ENCODE measurements at regions of chr1 and their contacts with region 1.

Region 1: DNA sequence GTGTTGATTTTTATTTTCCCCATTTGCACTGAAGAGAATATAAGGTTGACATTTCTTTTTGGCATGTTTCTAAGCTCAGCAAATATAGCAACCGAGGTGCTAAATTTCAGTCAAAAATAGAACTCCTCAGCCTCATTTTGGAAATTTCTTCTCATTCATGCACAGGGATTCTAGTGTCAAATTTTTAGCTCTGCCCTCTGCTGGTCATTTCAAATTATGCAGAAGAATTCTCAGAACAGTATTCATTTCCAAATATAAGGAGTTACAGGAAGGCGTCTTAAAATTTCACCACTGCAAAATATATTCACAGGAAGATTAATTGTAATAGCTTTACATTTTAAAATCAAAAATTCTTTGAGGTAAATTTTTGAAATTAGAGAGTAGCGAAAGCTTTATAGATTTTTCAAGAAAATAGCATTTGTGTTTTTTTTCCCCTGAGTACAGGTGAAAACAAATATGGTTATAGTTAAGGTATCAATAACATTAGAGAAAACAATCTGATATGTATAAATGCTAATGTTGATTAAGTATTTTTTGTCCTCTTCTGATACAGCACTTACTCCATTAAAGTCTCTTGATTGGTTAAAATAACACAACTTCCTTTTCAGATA is 57.9 kb downstream of the FMN2 start:
- DNase-seq: no peak
- H3K4me3 ChIP-seq: no peak overlapping the region
- H3K27ac ChIP-seq: no peak overlapping the region
- H3K27me3 ChIP-seq: no peaks in the 10 kb centered on the region
- CTCF ChIP-seq: peak; percentile 72

Region 2: GRCh38 chr1:240004086-240004749 is 145.4 kb before region 1 on chr1:
- CTCF ChIA-PET with region 1: interaction called, 34 read pairs
- POLR2A ChIA-PET with region 1: no interaction called
- DNase-seq: no peak
- H3K4me3 ChIP-seq: no peak overlapping the region
- H3K27ac ChIP-seq: no peak overlapping the region
- H3K27me3 ChIP-seq: peaks cover 2% of the 10 kb centered on the region
- CTCF ChIP-seq: peak; percentile 85

Region 3: GRCh38 chr1:240033406-240033805 is 116.2 kb before region 1 on chr1:
- CTCF ChIA-PET with region 1: interaction called, 175 read pairs
- POLR2A ChIA-PET with region 1: no interaction called
- DNase-seq: no peak
- H3K4me3 ChIP-seq: no peak overlapping the region
- H3K27ac ChIP-seq: no peak overlapping the region
- H3K27me3 ChIP-seq: no peaks in the 10 kb centered on the region
- CTCF ChIP-seq: no peak

Region 4: GRCh38 chr1:240092301-240093119 is 57.1 kb before region 1 on chr1:
- CTCF ChIA-PET with region 1: interaction called, 23 read pairs
- POLR2A ChIA-PET with region 1: no interaction called
- DNase-seq: peak; percentile 33
- H3K4me3 ChIP-seq: peak overlapping the region; percentile 76
- H3K27ac ChIP-seq: peak overlapping the region; percentile 47
- H3K27me3 ChIP-seq: no peaks in the 10 kb centered on the region
- CTCF ChIP-seq: peak; percentile 32; the same call in 1 of the 2 replicates

Region 5: GRCh38 chr1:240116831-240117769 is 32.5 kb before region 1 on chr1:
- CTCF ChIA-PET with region 1: interaction called, 16 read pairs
- POLR2A ChIA-PET with region 1: no interaction called
- DNase-seq: no peak
- H3K4me3 ChIP-seq: no peak overlapping the region
- H3K27ac ChIP-seq: no peak overlapping the region
- H3K27me3 ChIP-seq: no peaks in the 10 kb centered on the region
- CTCF ChIP-seq: no peak

Region 6: DNA sequence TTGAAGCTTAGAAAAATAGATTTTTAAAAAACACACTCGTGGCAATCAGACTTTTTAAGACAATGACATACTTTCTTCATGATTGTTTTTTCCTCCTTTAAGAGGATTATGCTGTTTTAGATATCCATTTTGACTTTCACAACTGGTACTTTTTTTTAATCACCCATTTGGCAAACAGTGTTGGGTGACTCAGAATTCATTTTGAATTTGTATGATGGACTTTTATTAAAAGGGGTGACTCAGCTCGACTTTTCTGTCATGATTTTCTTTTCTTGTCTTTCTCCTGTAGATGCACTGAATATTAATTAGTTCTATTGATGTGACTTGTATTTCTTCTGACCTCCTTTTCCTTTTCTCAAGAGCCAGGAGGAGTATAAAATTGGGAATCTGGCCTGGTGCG is 13.2 kb before region 1 on chr1:
- CTCF ChIA-PET with region 1: interaction called, 79 read pairs
- POLR2A ChIA-PET with region 1: no interaction called
- DNase-seq: no peak
- H3K4me3 ChIP-seq: no peak overlapping the region
- H3K27ac ChIP-seq: no peak overlapping the region
- H3K27me3 ChIP-seq: no peaks in the 10 kb centered on the region
- CTCF ChIP-seq: no peak

Region 7: GRCh38 chr1:240189386-240189989 is 39.9 kb after region 1 on chr1:
- CTCF ChIA-PET with region 1: interaction called, 17 read pairs
- POLR2A ChIA-PET with region 1: no interaction called
- DNase-seq: no peak
- H3K4me3 ChIP-seq: no peak overlapping the region
- H3K27ac ChIP-seq: no peak overlapping the region
- H3K27me3 ChIP-seq: no peaks in the 10 kb centered on the region
- CTCF ChIP-seq: peak; percentile 90

Measured in AG04450 (cell line).